ENCODE measurements at regions of chr3 and their contacts with region 1.

Region 1: GRCh38 chr3:178966299-178967176 is 105.1 kb downstream of the ZMAT3 start:
- DNase-seq: peak; percentile 38 to 61 (median 50)
- ATAC-seq: peak; percentile 86
- H3K4me3 ChIP-seq: no peak overlapping the region
- H3K27ac ChIP-seq: peak overlapping the region; percentile 4 to 53 (median 24)
- H3K4me1 ChIP-seq: peaks cover 8% of the 10 kb centered on the region
- H3K27me3 ChIP-seq: no peaks in the 10 kb centered on the region
- CTCF ChIP-seq: peak; percentile 12 to 70 (median 60)
- POLR2A ChIP-seq: no peak

Region 2: DNA sequence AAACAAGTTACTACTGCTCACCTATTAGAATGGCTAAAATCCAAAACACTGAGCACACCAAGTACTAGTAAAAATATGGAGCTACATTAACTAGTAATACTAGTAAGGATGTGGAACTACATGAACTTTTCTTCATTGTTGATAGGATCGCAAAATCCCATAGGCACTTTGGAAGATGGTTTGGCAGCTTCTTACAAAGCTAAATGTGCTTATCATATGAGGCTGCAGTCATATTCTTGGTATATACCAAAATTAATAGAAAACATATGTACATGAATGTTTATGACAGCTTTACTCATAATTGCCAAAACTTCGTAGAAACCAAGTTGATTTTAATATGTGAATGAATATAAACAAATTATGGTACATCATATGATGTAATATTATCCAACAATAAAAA is 797.1 kb before region 1 on chr3:
- intact Hi-C with region 1: no loop called
- DNase-seq: no peak
- ATAC-seq: no peak
- H3K4me3 ChIP-seq: no peak overlapping the region
- H3K27ac ChIP-seq: no peak overlapping the region
- H3K4me1 ChIP-seq: no peaks in the 10 kb centered on the region
- H3K27me3 ChIP-seq: no peaks in the 10 kb centered on the region
- CTCF ChIP-seq: no peak
- POLR2A ChIP-seq: no peak

Region 3: GRCh38 chr3:178436773-178437172 is 529.8 kb before region 1 on chr3:
- intact Hi-C with region 1: loop called (anchors 10 kb)
- DNase-seq: peak in 1 of 4 donors; percentile 9
- ATAC-seq: peak; percentile 40
- H3K4me3 ChIP-seq: no peak overlapping the region
- H3K27ac ChIP-seq: no peak overlapping the region
- H3K4me1 ChIP-seq: no peaks in the 10 kb centered on the region
- H3K27me3 ChIP-seq: no peaks in the 10 kb centered on the region
- CTCF ChIP-seq: peak; percentile 18 to 63 (median 59)
- POLR2A ChIP-seq: no peak

Region 4: DNA sequence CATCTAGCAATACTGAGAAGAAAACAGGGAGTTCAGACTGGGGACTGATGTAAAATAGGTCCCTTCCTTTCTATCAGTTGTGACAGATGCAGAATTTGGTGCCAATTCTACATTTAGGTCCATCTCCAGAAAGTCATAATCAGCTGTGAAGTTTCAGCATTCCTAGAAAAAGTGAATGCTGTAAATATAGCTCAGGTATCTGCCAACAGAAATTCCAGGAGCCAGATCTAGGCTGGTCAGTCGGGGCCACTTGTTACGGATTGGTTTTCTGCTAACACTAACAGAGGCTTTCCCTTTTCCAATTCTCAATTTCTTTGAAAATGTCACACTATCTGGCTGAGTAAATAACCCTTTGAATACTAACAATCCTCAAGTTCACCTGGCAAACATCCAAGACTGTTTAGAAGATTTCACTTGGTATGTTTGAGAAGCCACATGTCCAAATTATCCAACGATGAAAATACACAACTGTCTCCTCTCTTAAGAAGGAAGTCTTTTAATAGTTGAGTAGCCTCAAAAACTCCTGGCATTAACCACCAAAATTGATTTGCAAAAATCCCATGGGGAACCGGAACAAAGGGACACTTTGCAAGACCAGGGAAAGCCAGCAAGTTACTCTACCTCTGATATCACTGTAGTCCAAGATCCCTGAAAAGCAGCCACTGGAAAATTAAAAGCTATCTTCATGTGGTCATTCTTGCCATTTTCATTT is 117.2 kb before region 1 on chr3:
- intact Hi-C with region 1: no loop called
- DNase-seq: no peak
- ATAC-seq: no peak
- H3K4me3 ChIP-seq: no peak overlapping the region
- H3K27ac ChIP-seq: no peak overlapping the region
- H3K4me1 ChIP-seq: no peaks in the 10 kb centered on the region
- H3K27me3 ChIP-seq: no peaks in the 10 kb centered on the region
- CTCF ChIP-seq: no peak
- POLR2A ChIP-seq: no peak

Region 5: DNA sequence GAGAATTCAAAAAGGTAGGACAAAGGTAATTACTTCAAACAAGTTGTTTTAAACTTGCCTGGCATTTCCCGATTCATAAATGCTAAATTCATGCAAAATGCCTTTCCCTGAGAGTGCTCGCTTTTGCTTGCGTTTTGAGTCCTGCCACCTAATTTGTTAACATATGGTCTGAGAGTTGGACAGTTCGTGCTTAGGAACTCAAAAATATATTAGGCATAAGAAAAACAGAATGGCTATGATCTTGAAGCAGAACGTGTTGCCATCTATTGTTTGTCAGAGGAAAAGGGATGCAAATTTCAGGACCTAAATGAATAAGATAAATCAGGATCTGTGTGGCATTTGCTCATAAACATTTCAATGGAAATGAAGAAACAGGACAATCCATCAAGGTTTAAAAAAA is 90.7 kb before region 1 on chr3:
- intact Hi-C with region 1: no loop called
- DNase-seq: no peak
- ATAC-seq: no peak
- H3K4me3 ChIP-seq: no peak overlapping the region
- H3K27ac ChIP-seq: no peak overlapping the region
- H3K4me1 ChIP-seq: no peaks in the 10 kb centered on the region
- H3K27me3 ChIP-seq: no peaks in the 10 kb centered on the region
- CTCF ChIP-seq: no peak
- POLR2A ChIP-seq: no peak

Region 6: GRCh38 chr3:179398574-179399231 is 432.2 kb after region 1 on chr3:
- intact Hi-C with region 1: no loop called
- DNase-seq: no peak
- ATAC-seq: no peak
- H3K4me3 ChIP-seq: no peak overlapping the region
- H3K27ac ChIP-seq: no peak overlapping the region
- H3K4me1 ChIP-seq: no peaks in the 10 kb centered on the region
- H3K27me3 ChIP-seq: no peaks in the 10 kb centered on the region
- CTCF ChIP-seq: no peak
- POLR2A ChIP-seq: no peak